ENCODE measurements at regions of chr1 and their contacts with region 1.

Region 1: GRCh38 chr1:224851210-224851847 is 78.1 kb upstream of the DNAH14 start:
- DNase-seq: peak; percentile 85
- H3K4me3 Mint-ChIP-seq: no peak overlapping the region
- H3K27ac Mint-ChIP-seq: no peak overlapping the region
- H3K4me1 Mint-ChIP-seq: peaks cover 6% of the 10 kb centered on the region
- H3K27me3 Mint-ChIP-seq: peaks cover 9% of the 10 kb centered on the region
- CTCF ChIP-seq: peak; percentile 98

Region 2: GRCh38 chr1:224113918-224114786 is 737.2 kb before region 1 on chr1 and contains the start of gene FBXO28:
- CTCF ChIA-PET with region 1: no interaction called
- POLR2A ChIA-PET with region 1: no interaction called
- intact Hi-C with region 1: loop called (anchors 2 kb)
- DNase-seq: peak; percentile 99
- H3K4me3 Mint-ChIP-seq: peak within 1 kb of the TSS; percentile 90
- H3K27ac Mint-ChIP-seq: peak within 1 kb of the TSS; percentile 82
- H3K4me1 Mint-ChIP-seq: peaks cover 8% of the 10 kb centered on the region
- H3K27me3 Mint-ChIP-seq: no peaks in the 10 kb centered on the region
- CTCF ChIP-seq: no peak
- total RNA-seq, gene FBXO28: 97.6 and 110 TPM in 2 replicates

Region 3: DNA sequence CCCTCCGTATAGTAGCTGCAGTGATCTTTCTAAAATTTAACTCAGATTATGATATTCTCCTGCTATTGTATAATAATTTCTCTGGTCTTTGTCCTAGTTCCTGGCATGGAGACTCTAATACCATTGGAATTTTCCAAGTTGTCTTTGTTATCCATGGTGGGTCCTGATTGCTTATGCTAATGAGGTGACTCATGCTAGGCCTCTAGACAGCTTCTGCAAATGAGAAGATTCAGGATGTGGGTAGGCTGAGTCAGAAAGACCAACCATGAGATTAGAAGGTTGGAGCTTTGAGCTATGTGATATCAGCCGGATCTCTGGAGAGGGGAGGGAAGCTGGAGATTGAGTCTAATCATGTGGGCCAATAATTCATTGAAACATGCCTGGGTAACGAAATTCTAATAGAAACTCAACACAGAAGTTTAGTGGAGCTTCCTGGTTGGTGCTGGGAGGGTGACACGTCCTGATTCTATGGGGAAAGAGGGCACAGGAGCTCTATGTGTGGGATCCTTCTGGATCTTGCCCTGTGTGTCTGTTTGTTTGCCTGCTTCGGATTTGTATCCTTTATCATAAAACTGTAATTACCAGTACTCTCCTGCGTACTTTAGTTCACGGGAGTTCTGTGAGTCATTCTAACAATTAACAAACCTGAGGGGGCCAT is 308.4 kb before region 1 on chr1:
- CTCF ChIA-PET with region 1: interaction called, 17 read pairs
- POLR2A ChIA-PET with region 1: no interaction called
- intact Hi-C with region 1: no loop called
- DNase-seq: peak; percentile 92
- H3K4me3 Mint-ChIP-seq: no peak overlapping the region
- H3K27ac Mint-ChIP-seq: peak overlapping the region; percentile 59
- H3K4me1 Mint-ChIP-seq: peaks cover 22% of the 10 kb centered on the region
- H3K27me3 Mint-ChIP-seq: no peaks in the 10 kb centered on the region
- CTCF ChIP-seq: no peak

Region 4: GRCh38 chr1:224684979-224685425 is 166.3 kb before region 1 on chr1:
- CTCF ChIA-PET with region 1: interaction called, 18 read pairs
- POLR2A ChIA-PET with region 1: no interaction called
- intact Hi-C with region 1: no loop called
- DNase-seq: no peak
- H3K4me3 Mint-ChIP-seq: no peak overlapping the region
- H3K27ac Mint-ChIP-seq: no peak overlapping the region
- H3K4me1 Mint-ChIP-seq: no peaks in the 10 kb centered on the region
- H3K27me3 Mint-ChIP-seq: no peaks in the 10 kb centered on the region
- CTCF ChIP-seq: no peak

Region 5: DNA sequence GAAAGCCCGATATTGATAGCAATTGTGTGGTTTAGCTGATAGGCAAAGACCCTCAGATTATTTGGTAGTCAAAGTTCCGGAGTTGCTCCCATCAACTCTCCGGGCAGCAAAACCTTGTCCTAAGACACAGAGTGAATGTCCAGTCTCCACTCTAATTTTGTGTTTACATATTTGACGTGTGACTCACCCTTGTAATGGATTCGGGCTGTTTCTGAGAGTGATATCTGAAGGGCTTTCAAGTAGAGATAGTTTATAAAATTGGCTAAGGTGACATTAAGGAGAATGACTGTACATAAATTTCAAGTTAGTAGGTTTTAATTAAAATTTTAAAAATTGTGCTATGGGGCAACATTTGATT is 81.0 kb before region 1 on chr1:
- CTCF ChIA-PET with region 1: interaction called, 14 read pairs
- POLR2A ChIA-PET with region 1: no interaction called
- intact Hi-C with region 1: no loop called
- DNase-seq: peak; percentile 63
- H3K4me3 Mint-ChIP-seq: no peak overlapping the region
- H3K27ac Mint-ChIP-seq: no peak overlapping the region
- H3K4me1 Mint-ChIP-seq: peaks cover 8% of the 10 kb centered on the region
- H3K27me3 Mint-ChIP-seq: peaks cover 22% of the 10 kb centered on the region
- CTCF ChIP-seq: no peak

Region 6: GRCh38 chr1:224867715-224868114 is 16.4 kb after region 1 on chr1:
- CTCF ChIA-PET with region 1: interaction called, 88 read pairs
- POLR2A ChIA-PET with region 1: interaction called, 3 read pairs
- intact Hi-C with region 1: no loop called
- DNase-seq: no peak
- H3K4me3 Mint-ChIP-seq: no peak overlapping the region
- H3K27ac Mint-ChIP-seq: no peak overlapping the region
- H3K4me1 Mint-ChIP-seq: no peaks in the 10 kb centered on the region
- H3K27me3 Mint-ChIP-seq: no peaks in the 10 kb centered on the region
- CTCF ChIP-seq: no peak

Region 7: DNA sequence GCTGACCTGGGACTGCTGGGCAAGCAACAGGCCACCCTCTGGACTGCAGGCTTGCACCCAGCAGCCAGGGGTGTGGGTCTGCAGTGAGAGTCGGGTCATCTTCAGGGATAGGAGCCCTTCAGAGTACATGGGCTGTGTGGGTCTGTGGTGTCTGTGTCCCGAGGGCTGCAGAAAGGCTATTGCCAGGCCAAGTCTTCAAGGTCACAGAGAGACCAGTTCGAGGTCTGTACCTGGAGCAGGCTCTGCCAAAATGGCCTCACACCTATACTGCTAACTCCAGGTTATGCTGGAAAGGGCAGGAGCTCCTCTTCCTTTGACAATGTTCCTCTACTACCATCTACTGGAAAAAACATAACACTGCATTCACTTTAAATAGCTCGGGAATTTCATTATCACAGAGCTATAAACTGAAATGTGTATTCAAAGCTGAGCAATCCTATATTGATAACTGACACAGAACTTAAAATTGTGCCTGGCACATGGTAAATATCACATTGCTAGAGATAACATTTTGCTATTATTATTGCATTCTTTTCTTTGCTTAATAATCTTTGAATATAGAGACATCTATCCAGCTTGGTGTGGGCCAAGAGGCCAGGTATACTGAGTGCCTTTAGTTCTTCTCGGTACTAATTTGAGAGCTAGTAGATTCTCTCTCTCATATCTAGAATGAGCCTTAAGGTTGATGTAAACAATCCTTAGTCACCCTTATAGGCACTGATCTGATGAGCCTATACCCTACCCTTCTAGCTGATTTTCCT is 71.3 kb after region 1 on chr1:
- CTCF ChIA-PET with region 1: interaction called, 167 read pairs
- POLR2A ChIA-PET with region 1: interaction called, 4 read pairs
- intact Hi-C with region 1: loop called (anchors 1 kb)
- DNase-seq: peak; percentile 76
- H3K4me3 Mint-ChIP-seq: no peak overlapping the region
- H3K27ac Mint-ChIP-seq: no peak overlapping the region
- H3K4me1 Mint-ChIP-seq: peaks cover 4% of the 10 kb centered on the region
- H3K27me3 Mint-ChIP-seq: no peaks in the 10 kb centered on the region
- CTCF ChIP-seq: peak; percentile 99